Calu3 (cell line): ENCODE measurements at regions of chr3 and their contacts with region 1.

Region 1: DNA sequence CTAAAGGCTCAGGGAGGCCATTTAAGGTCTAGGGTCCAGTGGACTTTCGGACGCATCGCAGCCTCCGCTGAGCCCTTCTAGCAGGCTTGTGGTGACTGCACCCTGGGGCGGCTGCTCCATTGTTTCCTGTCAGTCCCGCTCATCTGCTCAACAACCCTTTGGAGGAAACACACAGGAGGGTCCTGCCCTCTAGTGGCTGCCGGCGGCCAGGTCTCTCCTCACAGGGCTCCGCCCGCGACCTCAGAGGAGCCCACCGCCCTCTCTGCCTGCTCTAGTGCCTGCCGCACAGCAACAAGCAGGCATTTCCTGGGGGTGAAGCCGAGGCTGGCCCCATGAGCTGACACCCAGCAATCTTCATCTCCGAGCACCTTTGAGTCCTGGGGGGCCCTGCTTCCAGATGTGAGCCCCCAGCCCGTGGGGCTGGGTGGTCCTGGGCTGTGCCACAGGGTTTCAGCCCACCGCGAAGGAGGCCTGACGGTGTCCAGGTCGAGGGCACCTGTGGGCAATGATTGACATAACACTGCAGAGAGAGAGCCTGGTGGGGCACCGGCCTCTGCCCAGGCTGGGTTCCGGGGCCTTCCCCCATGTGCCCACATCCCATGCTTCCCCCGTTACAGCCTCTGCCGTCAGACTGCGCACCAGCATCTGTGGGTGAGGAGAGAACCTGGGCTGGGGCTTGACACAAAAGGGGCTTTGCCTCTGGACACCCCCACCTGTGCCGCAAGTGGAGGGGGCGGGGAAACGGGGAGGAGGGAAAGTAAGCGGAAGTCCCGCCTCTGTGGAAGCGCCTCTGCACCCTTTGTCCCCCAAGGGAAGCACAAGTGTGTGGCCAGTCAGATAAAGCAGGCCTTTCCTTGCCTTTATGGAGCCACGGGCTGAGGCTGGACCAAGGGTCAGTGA is 27.0 kb upstream of the SFMBT1 start:
- DNase-seq: peak; percentile 88
- H3K4me3 Mint-ChIP-seq: peak overlapping the region; percentile 87
- H3K27ac Mint-ChIP-seq: peak overlapping the region; percentile 27
- H3K4me1 Mint-ChIP-seq: peaks cover 15% of the 10 kb centered on the region
- H3K27me3 Mint-ChIP-seq: no peaks in the 10 kb centered on the region
- CTCF ChIP-seq: peak; percentile 86

Region 2: GRCh38 chr3:52742418-52743041 is 330.4 kb before region 1 on chr3:
- CTCF ChIA-PET with region 1: no interaction called
- intact Hi-C with region 1: loop called (anchors 5 kb)
- DNase-seq: peak; percentile 18
- H3K4me3 Mint-ChIP-seq: no peak overlapping the region
- H3K27ac Mint-ChIP-seq: no peak overlapping the region
- H3K4me1 Mint-ChIP-seq: no peaks in the 10 kb centered on the region
- H3K27me3 Mint-ChIP-seq: no peaks in the 10 kb centered on the region
- CTCF ChIP-seq: peak; percentile 59

Region 3: DNA sequence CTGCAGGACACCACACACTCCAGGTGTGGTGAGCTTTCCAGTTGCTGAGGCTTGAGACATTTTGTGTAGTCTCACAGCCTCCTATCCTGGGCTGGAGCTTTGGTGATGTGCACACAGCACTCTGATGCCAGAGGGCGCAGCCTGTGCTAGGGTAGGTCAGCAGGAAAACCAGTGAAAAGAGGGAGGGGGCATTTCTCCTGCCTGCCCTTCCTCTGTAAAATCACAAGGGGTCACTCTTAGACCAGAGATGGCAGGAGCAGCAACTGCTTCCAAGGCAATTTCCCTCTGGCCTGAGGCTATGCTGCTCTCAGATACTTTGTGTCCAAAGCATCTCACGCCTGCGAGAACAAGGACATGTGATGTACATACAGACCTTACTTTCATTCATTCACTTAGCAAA is 221.6 kb before region 1 on chr3:
- CTCF ChIA-PET with region 1: no interaction called
- intact Hi-C with region 1: loop called (anchors 1 kb)
- DNase-seq: peak; percentile 42
- H3K4me3 Mint-ChIP-seq: no peak overlapping the region
- H3K27ac Mint-ChIP-seq: no peak overlapping the region
- H3K4me1 Mint-ChIP-seq: no peaks in the 10 kb centered on the region
- H3K27me3 Mint-ChIP-seq: no peaks in the 10 kb centered on the region
- CTCF ChIP-seq: peak; percentile 59

Region 4: DNA sequence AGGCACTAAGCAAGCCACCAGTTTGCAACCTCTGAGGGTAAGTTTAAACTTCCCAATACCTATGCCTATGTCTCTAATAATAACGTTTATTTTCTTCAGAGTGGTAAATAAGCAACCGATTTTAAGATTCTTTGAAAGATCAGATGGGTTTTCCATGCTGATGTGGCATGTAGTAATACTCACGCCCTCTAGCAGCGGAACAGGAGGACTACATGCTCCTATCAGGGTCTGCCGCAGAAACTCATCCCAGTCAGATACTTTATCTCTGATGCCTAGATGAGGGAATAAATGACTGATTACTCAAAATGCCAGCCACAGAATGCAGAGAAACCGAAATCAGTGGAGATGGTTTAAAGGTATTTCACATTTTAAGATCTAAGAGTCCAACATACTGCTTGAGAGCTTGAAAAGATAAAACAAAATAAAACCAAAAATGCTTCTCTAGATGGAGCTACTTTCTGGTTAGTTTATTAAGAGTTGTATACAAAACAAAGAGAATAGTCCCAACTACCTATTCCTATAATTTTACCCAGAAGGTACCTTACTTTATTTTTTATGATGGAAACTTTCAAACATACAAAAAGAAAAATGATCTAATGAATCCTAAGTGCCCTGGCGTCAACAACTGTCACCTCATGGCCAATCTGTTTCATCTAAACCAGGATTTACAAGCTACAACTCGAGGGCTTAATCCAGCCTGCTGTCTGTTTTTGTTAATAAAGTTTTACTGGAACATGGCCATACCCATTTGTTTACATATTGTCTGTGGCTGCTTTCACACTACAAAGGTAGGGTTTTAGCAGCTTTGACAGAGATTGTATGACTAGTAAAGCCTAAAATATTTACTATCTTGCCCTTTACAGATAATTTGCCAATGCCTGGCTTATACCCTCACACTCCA is 138.0 kb before region 1 on chr3:
- CTCF ChIA-PET with region 1: interaction called, 4 read pairs
- intact Hi-C with region 1: loop called (anchors 10 kb)
- DNase-seq: peak; percentile 23
- H3K4me3 Mint-ChIP-seq: no peak overlapping the region
- H3K27ac Mint-ChIP-seq: no peak overlapping the region
- H3K4me1 Mint-ChIP-seq: no peaks in the 10 kb centered on the region
- H3K27me3 Mint-ChIP-seq: no peaks in the 10 kb centered on the region
- CTCF ChIP-seq: peak; percentile 32

Region 5: GRCh38 chr3:53238051-53238720 is 165.3 kb after region 1 on chr3:
- CTCF ChIA-PET with region 1: no interaction called
- intact Hi-C with region 1: no loop called
- DNase-seq: peak; percentile 82
- H3K4me3 Mint-ChIP-seq: peak overlapping the region; percentile 60
- H3K27ac Mint-ChIP-seq: peak overlapping the region; percentile 91
- H3K4me1 Mint-ChIP-seq: peaks cover 50% of the 10 kb centered on the region
- H3K27me3 Mint-ChIP-seq: no peaks in the 10 kb centered on the region
- CTCF ChIP-seq: no peak